ENCODE measurements at regions of chr5 and their contacts with region 1.

Region 1: DNA sequence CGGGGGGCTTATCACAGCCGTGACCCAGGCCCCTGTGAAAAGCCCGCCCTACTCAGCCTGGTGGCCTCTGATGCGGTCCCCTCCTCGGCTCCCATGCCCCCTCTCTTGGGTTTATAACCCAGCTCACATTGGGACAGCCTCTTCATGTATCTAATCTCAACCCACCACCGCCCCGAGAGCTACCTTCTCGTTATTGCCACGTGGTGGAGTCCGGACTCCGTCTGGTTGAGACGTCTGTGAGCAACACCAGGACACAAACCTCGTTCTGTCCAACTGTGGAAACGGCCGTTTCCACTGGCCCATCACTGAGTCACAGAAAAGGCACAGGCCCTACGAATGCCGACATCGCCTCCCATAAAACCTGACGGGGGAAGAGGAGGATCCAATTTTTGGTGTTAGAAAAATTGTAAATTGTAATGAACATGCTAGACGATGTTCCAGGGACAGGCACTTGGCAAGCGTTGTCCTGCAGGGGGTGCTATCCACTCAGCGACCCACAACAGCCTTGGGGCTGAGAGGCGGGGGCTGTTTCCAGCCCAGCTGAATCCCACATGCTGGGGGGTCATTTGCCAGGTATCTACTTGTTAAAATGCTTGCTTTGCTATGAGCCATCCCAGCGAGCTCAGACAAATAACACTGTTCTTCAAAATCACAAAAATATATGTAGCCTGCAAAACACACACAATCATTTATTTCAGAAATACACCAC is 37.3 kb upstream of the N4BP3 start:
- DNase-seq: peak; percentile 59
- H3K4me3 ChIP-seq: no peak overlapping the region
- H3K27ac ChIP-seq: no peak overlapping the region
- H3K4me1 ChIP-seq: no peaks in the 10 kb centered on the region
- H3K27me3 ChIP-seq: no peaks in the 10 kb centered on the region
- CTCF ChIP-seq: peak; percentile 84

Region 2: DNA sequence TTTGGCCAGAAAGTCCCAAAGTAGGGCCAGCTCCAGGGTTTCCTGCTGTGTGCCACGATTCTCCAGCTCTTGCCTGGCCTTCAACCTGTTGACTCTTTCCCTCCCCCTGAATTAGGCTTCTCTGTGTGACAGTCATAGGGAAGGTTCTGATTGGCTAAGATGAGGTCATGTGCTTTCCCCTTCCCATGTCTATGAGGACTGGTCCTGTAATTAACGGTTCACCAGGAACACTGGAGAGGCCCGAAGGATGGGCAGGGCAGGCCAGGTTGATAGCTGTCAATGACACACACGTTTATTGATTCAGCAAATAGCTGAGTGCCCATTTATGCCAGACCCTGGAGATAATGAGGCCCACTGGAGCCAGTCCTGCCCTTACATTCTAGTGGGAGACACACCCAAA is 638.4 kb before region 1 on chr5:
- CTCF ChIA-PET with region 1: no interaction called
- POLR2A ChIA-PET with region 1: no interaction called
- intact Hi-C with region 1: no loop called
- DNase-seq: no peak
- H3K4me3 ChIP-seq: no peak overlapping the region
- H3K27ac ChIP-seq: no peak overlapping the region
- H3K4me1 ChIP-seq: no peaks in the 10 kb centered on the region
- H3K27me3 ChIP-seq: no peaks in the 10 kb centered on the region
- CTCF ChIP-seq: no peak

Region 3: DNA sequence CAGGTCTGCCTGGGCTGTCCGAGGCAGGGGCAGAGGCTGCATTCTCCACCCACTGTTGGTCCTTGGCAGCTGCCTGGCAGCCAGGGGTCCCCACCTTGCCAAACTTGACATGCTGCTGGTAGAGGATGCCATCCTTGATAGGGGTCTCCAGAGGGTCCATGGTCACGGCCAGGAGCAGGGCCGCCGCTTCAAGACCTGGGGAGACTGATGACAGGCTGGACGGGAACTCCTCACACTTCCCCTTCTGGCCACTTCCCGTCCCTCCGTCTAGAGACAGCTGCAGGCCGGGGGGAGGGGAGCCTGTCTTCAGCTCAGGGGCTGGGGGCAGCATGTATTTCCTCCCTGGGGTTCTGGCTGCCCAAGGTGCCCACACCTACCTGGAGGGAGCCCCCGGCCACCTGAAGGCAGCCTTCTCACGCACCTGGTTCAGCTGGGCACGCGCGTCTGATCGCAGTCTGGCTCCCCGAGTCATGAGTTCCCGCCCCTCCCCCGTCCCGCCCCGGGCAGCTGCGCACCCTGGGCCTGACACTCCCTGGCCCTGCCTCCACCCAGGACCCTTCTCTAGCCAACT is 566.5 kb before region 1 on chr5 and contains the start of gene DOK3:
- CTCF ChIA-PET with region 1: no interaction called
- POLR2A ChIA-PET with region 1: no interaction called
- intact Hi-C with region 1: no loop called
- DNase-seq: no peak
- H3K4me3 ChIP-seq: no peak within 1 kb of the TSS
- H3K27ac ChIP-seq: no peak within 1 kb of the TSS
- H3K4me1 ChIP-seq: no peaks in the 10 kb centered on the region
- H3K27me3 ChIP-seq: no peaks in the 10 kb centered on the region
- CTCF ChIP-seq: no peak
- total RNA-seq, gene DOK3: 13.1 and 15.0 TPM in 2 replicates

Region 4: DNA sequence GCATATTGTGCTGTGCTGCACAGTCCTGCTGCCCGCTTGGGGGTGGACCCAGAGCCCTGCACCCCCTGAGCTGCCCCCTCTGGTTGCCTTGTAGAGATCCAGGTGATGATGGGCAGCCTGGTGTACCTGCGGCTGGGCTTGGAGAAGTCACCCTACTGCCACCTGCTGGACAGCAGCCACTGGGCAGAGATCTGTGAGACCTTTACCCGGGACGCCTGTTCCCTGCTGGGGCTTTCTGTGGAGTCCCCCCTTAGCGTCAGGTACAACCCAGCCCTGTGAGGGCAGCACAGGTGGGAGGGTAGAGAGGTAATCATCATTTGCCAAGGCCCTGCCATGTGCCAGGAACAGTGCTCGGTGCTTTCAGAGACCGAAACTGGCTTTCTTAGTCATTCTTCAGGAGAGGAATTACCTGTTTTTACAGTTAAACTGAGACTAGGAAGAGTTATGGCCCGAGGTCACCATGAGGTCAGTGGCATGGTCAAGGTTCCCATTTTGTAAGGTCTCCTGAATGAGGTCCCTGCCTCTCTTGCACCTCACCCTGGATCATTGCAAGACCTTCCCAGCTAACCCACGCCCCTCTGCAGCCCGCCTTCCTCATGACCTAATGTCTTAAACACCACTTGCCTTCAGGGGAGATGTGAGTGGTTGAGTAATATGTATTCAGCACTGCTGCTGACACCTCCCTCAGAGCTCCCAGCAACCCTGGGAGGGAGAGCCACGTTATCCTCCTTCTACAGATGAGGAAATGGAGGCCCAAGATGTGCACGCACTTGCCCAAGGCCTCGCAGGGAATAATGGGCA is 70.2 kb after region 1 on chr5:
- CTCF ChIA-PET with region 1: no interaction called
- POLR2A ChIA-PET with region 1: no interaction called
- intact Hi-C with region 1: loop called (anchors 1 kb)
- DNase-seq: peak; percentile 20
- H3K4me3 ChIP-seq: no peak overlapping the region
- H3K27ac ChIP-seq: no peak overlapping the region
- H3K4me1 ChIP-seq: no peaks in the 10 kb centered on the region
- H3K27me3 ChIP-seq: no peaks in the 10 kb centered on the region
- CTCF ChIP-seq: peak; percentile 61

Region 5: GRCh38 chr5:178153573-178154343 is 77.8 kb after region 1 on chr5 and contains the start of gene NHP2:
- CTCF ChIA-PET with region 1: interaction called, 16 read pairs
- POLR2A ChIA-PET with region 1: interaction called, 3 read pairs
- intact Hi-C with region 1: no loop called
- DNase-seq: peak; percentile 96
- H3K4me3 ChIP-seq: peak within 1 kb of the TSS; percentile 82
- H3K27ac ChIP-seq: peak within 1 kb of the TSS; percentile 77
- H3K4me1 ChIP-seq: peaks cover 8% of the 10 kb centered on the region
- H3K27me3 ChIP-seq: no peaks in the 10 kb centered on the region
- CTCF ChIP-seq: no peak
- total RNA-seq, gene NHP2: 223 and 232 TPM in 2 replicates

Region 6: GRCh38 chr5:178163772-178164735 is 88.1 kb after region 1 on chr5:
- CTCF ChIA-PET with region 1: no interaction called
- POLR2A ChIA-PET with region 1: no interaction called
- intact Hi-C with region 1: loop called (anchors 1 kb)
- DNase-seq: peak; percentile 84
- H3K4me3 ChIP-seq: peak overlapping the region; percentile 25
- H3K27ac ChIP-seq: no peak overlapping the region
- H3K4me1 ChIP-seq: no peaks in the 10 kb centered on the region
- H3K27me3 ChIP-seq: no peaks in the 10 kb centered on the region
- CTCF ChIP-seq: peak; percentile 93

Region 7: DNA sequence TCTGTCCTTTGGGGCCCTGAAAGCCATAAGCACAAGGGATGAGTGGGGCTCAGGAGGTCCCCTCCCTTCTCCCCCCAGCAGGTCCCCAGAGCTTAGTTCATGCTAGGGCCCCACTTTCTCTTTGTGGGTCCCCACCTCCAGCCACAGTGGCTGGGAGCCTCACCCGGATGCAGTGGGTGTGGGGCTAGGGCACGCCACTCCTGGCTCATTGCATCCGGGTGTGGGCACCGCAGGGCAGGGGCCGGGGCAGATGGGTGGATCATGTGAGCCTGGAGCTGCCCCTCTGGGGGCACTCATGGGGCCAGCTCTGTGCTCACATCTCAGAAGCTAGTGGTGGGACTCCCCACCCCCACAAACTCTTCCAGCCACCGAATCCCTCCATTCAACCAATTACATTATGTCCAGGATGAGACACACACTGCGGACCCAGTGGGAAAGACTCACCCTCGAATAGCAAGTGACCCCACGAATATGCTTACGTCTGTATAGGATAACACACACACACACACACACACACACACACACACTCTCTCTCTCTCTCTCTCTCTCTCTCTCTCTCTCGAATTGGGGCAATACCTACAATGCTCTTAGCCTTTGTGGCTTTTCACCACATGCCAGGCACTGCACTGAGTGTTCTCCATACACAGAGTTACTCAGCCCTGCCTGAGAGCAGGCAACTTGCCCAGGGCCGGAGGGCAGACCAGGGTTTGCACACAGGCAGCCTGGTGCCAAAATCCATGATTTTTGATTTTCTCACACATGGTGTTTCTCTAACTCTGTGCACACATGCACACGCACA is 173.4 kb after region 1 on chr5:
- CTCF ChIA-PET with region 1: no interaction called
- POLR2A ChIA-PET with region 1: no interaction called
- intact Hi-C with region 1: no loop called
- DNase-seq: no peak
- H3K4me3 ChIP-seq: no peak overlapping the region
- H3K27ac ChIP-seq: no peak overlapping the region
- H3K4me1 ChIP-seq: no peaks in the 10 kb centered on the region
- H3K27me3 ChIP-seq: no peaks in the 10 kb centered on the region
- CTCF ChIP-seq: no peak

Region 8: DNA sequence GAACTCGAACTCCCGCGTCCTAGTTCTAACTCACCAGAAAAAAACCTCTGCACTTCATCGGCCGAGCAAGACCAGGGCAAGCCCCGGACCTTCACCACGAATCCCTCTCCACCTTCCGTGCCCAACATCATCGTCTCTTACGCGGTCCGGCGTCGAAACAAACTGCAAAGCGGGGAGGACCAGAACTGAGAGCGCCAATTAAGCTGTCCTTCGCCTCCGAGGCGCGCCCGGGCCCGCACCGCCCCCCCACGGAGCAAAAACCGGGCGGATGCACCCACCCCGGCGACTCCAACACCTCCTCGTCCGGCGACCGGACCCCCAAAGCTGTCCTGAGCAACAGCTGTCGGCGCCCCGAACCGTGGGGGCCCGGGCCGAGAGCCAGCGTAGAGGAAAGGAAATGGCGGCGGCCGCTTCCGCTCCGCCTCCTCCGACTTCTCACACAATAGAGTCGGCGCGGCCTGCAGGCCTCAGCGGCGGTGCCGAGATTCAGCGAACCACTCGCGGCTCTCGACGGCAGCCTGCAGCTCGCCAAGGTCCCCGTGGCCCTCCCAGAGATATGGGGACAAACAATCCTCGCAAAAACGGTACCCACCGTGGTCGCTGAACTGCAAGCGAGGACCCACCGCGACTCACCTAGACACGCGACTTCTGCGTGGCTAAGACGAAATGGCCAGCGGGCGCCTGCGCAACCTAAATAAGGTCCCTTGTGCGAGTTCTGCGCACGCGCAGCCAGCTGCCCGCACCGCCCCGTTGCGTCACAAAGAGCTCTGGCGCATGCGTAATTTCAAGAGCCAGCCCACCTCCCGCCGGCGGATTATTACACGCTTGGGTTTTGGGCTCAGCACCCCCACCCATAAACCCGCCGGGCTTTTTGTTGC is 1547.2 kb after region 1 on chr5 and contains the start of gene HNRNPH1:
- CTCF ChIA-PET with region 1: no interaction called
- POLR2A ChIA-PET with region 1: interaction called, 25 read pairs
- intact Hi-C with region 1: no loop called
- DNase-seq: peak; percentile 98
- H3K4me3 ChIP-seq: peak within 1 kb of the TSS; percentile 91
- H3K27ac ChIP-seq: peak within 1 kb of the TSS; percentile 99
- H3K4me1 ChIP-seq: peaks cover 29% of the 10 kb centered on the region
- H3K27me3 ChIP-seq: no peaks in the 10 kb centered on the region
- CTCF ChIP-seq: no peak
- total RNA-seq, gene HNRNPH1: 918 and 972 TPM in 2 replicates

Measured in A673 (cell line).